Activated CD8-positive, alpha-beta memory T cell treated with anti-CD3 and anti-CD28 coated beads, Interleukin-2, amount 10 ng/mL, durations not matched to agents 7 days and 5 days (primary cell): ENCODE measurements at regions of chr14 and their contacts with region 1.

Region 1: DNA sequence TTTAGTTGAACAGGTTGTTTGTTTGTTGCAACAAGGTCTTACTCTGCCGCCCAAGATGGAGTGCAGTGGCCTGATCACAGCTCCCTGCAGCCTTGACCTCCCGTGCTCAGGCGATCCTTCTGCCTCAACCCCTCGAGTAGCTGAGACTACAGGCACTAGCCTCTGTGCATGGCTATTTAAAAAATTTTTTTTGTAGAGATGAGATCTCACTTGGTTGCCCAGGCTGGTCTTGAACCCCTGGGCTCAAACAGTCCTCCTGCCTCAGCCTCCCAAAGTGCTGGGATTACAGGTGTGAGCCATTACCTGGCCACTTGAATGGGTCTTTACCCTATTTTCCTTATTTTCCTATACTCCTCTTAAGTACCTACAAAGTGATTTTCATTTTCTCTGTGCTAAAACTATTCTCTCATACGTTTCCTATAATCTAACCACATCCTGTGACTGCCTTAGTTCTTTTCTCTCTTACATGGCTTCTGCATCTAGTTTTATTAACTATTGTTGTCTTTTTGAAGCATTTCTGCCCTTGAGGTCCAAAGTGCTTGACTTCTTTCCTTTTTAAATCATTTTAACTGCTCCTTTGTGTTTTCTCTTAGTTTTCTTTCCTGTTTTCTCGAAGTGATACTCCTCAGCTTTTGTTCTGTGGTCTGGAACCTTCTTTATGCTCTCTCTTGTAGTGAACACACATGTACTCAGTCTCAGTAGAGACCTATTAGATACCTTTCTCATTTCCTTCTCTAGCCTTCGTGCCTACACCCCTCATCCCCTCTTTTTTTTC is 14.1 kb downstream of the GPX2 start:
- DNase-seq: no peak
- ATAC-seq: peak; percentile 83
- H3K4me3 Mint-ChIP-seq: no peak overlapping the region
- H3K27ac Mint-ChIP-seq: no peak overlapping the region
- H3K4me1 Mint-ChIP-seq: peaks cover 21% of the 10 kb centered on the region
- H3K27me3 Mint-ChIP-seq: no peaks in the 10 kb centered on the region

Region 2: GRCh38 chr14:64914237-64914971 is 14.0 kb before region 1 on chr14 and contains the start of gene CHURC1:
- CTCF ChIA-PET with region 1: interaction called, 13 read pairs
- DNase-seq: peak; percentile 98
- ATAC-seq: peak; percentile 98
- H3K4me3 Mint-ChIP-seq: peak within 1 kb of the TSS; percentile 78
- H3K27ac Mint-ChIP-seq: peak within 1 kb of the TSS; percentile 91
- H3K4me1 Mint-ChIP-seq: peaks cover 44% of the 10 kb centered on the region
- H3K27me3 Mint-ChIP-seq: peaks cover 18% of the 10 kb centered on the region
- total RNA-seq, gene CHURC1: 49.3 to 57.9 TPM